Activated CD4-positive, alpha-beta T cell treated with anti-CD3 and anti-CD28 coated beads, Interleukin-2, amount 10 ng/mL, durations not matched to agents 24 days and 14 days (primary cell): ENCODE measurements at regions of chr4 and their contacts with region 1.

Region 1: DNA sequence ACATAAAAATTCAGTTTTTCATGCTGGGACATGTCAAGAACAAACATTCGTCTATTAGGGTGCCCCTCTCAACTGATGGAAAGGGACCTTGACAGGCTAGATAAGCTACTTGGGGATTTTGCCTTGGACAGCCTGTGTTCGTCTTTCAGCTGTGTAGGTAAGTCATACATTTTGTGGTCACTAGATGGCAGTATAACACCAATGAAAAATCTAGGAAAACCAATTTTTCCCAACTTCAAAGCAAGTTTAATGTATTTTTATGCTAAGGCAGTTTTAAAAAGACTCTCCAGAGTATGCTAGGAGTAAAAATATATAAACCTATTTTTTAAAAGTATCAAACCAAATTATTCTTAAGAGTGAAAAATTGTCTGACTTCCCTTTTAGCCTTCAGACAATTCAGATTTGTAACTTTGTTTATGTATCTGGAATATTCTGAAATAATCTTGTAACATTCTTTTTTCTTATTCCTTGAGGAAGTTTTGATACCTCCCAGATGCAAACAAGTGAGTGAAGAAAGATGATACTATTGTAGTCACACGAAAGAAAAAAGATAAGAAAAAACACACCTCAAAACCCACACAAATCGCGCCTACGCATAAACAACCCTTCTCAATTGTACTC is 158.3 kb downstream of the CPE start:
- DNase-seq: peak; percentile 64
- H3K4me3 Mint-ChIP-seq: no peak overlapping the region
- H3K27ac Mint-ChIP-seq: no peak overlapping the region
- H3K4me1 Mint-ChIP-seq: no peaks in the 10 kb centered on the region
- H3K27me3 Mint-ChIP-seq: peaks cover 7% of the 10 kb centered on the region

Region 2: DNA sequence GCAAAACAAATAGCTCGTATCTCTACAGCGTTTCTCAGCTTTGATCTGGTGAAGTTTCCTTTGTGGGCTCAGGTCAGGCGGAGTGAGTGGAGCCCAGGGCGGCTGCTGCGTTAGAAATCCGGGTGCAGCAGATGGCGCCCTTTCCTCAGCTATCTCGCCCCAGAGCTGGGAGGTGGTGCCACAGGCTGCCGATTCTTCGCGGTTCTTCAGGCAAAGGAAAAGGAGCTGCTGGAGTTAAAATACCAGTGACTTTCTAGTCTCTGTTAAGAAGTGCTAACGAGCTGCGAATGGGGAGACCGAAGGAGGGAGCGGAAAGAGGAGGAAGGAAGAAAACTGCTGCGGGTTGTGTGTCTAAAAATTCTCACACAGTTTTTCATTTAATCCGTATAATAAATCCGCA is 43.8 kb before region 1 on chr4:
- intact Hi-C with region 1: loop called (anchors 2 kb)
- DNase-seq: peak; percentile 88
- H3K4me3 Mint-ChIP-seq: peak overlapping the region; percentile 52
- H3K27ac Mint-ChIP-seq: no peak overlapping the region
- H3K4me1 Mint-ChIP-seq: peaks cover 3% of the 10 kb centered on the region
- H3K27me3 Mint-ChIP-seq: peaks cover 20% of the 10 kb centered on the region

Region 3: GRCh38 chr4:165700855-165701254 is 163.7 kb after region 1 on chr4:
- intact Hi-C with region 1: loop called (anchors 2 kb)
- DNase-seq: no peak
- H3K4me3 Mint-ChIP-seq: no peak overlapping the region
- H3K27ac Mint-ChIP-seq: no peak overlapping the region
- H3K4me1 Mint-ChIP-seq: no peaks in the 10 kb centered on the region
- H3K27me3 Mint-ChIP-seq: no peaks in the 10 kb centered on the region

Region 4: DNA sequence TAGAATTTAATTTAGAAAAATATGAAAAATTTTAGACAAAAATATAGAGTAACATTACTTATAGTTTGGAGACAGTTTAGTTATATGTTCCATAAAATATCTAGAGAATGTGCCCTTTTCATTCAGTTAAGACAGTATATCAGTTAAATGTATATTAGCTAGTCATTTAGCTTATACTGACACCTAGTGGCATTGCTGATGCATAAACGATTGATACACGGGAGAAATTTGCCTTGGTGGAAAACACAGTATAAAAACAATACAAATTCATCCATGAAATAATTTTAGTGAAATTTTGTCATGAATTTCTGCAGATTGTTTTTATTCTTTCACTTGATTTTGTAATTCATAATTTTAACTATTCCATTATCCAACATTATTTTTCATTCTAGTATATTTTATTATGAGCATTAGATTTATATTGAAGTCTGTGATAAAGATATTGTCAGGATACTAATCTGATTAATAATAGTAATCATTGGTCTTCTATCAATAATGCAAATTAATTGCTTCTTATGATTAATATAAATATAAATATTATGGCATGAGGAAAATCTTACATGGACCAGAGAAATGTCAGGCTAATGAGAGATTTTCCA is 554.9 kb after region 1 on chr4:
- intact Hi-C with region 1: loop called (anchors 1 kb)
- DNase-seq: no peak
- H3K4me3 Mint-ChIP-seq: no peak overlapping the region
- H3K27ac Mint-ChIP-seq: no peak overlapping the region
- H3K4me1 Mint-ChIP-seq: no peaks in the 10 kb centered on the region
- H3K27me3 Mint-ChIP-seq: no peaks in the 10 kb centered on the region